Common myeloid progenitor, CD34-positive (primary cell): ENCODE measurements at regions of chr10 and their contacts with region 1.

Region 1: GRCh38 chr10:3197348-3198003 is 24.9 kb upstream of the PITRM1 start:
- DNase-seq: peak; percentile 31 to 69 (median 59)
- H3K4me3 ChIP-seq: peak overlapping the region in 4 of 7 experiments; percentile 11 to 54 (median 35)
- H3K27ac ChIP-seq: no peak overlapping the region
- H3K4me1 ChIP-seq: peaks cover 0 to 21% (median 7%) of the 10 kb centered on the region in 4 experiments
- H3K27me3 ChIP-seq: peaks cover 0 to 16% (median 0%) of the 10 kb centered on the region in 5 experiments

Region 2: DNA sequence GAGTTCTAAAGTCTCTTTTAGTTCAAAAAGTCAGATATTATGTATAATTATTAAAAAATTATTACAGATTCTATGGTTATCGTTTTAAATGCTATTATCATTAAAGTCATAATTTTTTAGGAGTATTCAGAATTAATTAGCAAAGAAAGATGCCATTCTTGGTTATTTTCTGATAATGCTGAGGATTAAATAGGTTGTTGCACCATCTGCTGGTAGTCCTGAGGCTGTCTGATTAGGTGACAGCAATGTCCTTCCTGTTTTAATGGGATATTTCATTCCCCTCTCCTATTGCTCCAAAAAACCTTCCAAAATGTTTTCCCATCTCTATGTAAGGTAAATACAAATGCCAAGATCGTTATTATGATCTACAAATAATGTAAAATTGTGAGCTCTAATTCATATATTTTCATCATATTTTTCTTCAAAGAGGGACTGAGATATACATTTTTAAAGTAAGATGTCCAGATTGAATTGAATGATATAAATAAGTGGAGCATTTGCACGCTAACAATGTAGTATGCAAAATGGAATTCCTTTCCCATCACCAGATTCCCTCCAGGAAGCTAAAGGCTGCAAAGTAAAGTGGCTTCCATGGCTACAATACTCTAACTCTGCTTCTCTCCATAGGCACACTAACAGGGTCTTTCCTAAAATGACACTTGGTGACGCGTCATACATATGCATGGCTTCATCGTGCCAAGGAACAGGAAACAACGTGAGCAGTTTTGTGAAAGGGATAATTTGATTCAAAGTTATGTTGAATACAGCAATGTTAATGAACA is 1569.7 kb after region 1 on chr10:
- CTCF ChIA-PET with region 1: interaction called, 35 read pairs
- POLR2A ChIA-PET with region 1: no interaction called
- DNase-seq: peak; percentile 38 to 53 (median 50)
- H3K4me3 ChIP-seq: no peak overlapping the region
- H3K27ac ChIP-seq: no peak overlapping the region
- H3K4me1 ChIP-seq: peaks cover 0 to 13% (median 5%) of the 10 kb centered on the region in 4 experiments
- H3K27me3 ChIP-seq: no peaks in the 10 kb centered on the region